SK-N-SH (cell line): ENCODE measurements at regions of chr5 and their contacts with region 1.

Region 1: GRCh38 chr5:23223846-23224245 is 283.6 kb upstream of the PRDM9 start:
- DNase-seq: no peak
- H3K4me3 ChIP-seq: no peak overlapping the region
- H3K27ac ChIP-seq: no peak overlapping the region
- H3K4me1 ChIP-seq: no peaks in the 10 kb centered on the region
- H3K27me3 ChIP-seq: no peaks in the 10 kb centered on the region
- CTCF ChIP-seq: no peak
- EP300 ChIP-seq: no peak
- RAD21 ChIP-seq: no peak

Region 2: DNA sequence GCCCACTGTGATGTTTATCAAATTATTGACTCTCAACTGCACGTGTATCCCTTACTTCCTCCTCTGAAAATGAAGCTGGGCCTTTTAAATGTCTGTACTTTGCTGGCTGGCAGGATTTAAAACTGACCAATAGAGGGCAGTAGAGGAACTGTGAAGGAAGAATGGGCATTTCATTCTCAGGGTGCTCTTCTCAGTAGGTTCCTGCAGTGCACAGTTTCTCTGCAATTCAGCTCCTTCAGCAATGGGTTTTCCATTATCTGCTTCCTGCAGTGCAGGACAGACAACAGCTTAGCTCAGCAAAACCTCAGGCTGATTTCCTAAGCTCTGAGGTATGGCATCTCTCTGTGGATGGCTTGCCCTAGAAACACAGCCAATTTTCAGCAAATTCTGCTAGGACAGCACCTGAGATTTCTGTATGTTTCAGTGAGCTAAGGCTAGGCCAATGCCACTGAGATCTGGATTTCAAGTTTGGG is 14.9 kb before region 1 on chr5:
- CTCF ChIA-PET with region 1: interaction called, 12 read pairs
- POLR2A ChIA-PET with region 1: no interaction called
- DNase-seq: peak; percentile 34
- H3K4me3 ChIP-seq: peak overlapping the region in 1 of 2 experiments; percentile 25; a peak in 1 of 4 replicates
- H3K27ac ChIP-seq: no peak overlapping the region
- H3K4me1 ChIP-seq: no peaks in the 10 kb centered on the region
- H3K27me3 ChIP-seq: peaks cover 8% of the 10 kb centered on the region; the same call in 1 of the 2 replicates
- CTCF ChIP-seq: peak; percentile 82
- EP300 ChIP-seq: no peak
- RAD21 ChIP-seq: peak; percentile 62